Lower leg skin (tissue), 4 donors: ENCODE measurements at regions of chr11 and their contacts with region 1.

Region 1: DNA sequence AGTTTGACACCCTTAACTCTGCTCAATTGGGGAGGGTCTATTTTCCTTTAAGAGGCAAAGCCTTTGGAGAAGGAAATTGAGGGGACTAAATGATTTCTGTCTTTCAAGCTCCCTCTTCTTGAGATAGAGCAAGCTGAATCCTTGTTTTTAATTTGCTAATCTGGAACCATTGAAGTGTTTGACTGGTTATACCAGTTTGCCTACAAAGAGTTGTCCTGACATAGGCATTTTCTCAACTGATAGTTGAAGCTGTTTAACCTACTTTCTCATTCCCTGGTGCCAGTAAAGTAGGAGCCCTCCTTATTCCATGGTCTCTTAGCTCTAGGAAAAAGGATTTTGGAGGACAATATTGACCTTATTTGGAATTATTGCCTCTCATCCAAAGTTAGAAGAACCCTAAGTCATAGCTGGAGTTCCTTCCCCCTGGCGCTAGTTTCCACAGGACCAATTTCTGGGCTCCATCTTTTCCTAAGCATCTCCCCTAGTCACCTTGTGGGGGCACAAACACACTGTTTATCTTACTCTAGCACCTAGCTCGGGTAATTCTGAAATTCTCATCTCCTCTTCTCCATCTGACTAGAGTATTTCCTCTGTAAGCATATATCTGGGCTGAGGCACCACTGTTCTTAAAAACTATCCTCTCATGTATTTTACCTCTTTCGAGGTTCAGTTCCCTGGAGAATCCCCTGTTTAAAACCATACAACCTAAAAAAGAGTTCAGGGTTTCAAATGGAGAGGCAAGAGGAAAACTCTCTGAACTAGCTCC is 7.4 kb downstream of the ZDHHC5 start:
- DNase-seq: no peak
- H3K4me3 ChIP-seq: no peak overlapping the region
- CTCF ChIP-seq: no peak
- POLR2A ChIP-seq: no peak

Region 2: GRCh38 chr11:57727185-57727584 is 51.8 kb after region 1 on chr11:
- intact Hi-C with region 1: no loop called
- DNase-seq: no peak
- H3K4me3 ChIP-seq: no peak overlapping the region
- CTCF ChIP-seq: no peak
- POLR2A ChIP-seq: no peak

Region 3: GRCh38 chr11:58958500-58958899 is 1283.1 kb after region 1 on chr11:
- intact Hi-C with region 1: loop called (anchors 10 kb)
- DNase-seq: no peak
- H3K4me3 ChIP-seq: no peak overlapping the region
- CTCF ChIP-seq: no peak
- POLR2A ChIP-seq: no peak